AG04449 (cell line): ENCODE measurements at regions of chr6 and their contacts with region 1.

Region 1: DNA sequence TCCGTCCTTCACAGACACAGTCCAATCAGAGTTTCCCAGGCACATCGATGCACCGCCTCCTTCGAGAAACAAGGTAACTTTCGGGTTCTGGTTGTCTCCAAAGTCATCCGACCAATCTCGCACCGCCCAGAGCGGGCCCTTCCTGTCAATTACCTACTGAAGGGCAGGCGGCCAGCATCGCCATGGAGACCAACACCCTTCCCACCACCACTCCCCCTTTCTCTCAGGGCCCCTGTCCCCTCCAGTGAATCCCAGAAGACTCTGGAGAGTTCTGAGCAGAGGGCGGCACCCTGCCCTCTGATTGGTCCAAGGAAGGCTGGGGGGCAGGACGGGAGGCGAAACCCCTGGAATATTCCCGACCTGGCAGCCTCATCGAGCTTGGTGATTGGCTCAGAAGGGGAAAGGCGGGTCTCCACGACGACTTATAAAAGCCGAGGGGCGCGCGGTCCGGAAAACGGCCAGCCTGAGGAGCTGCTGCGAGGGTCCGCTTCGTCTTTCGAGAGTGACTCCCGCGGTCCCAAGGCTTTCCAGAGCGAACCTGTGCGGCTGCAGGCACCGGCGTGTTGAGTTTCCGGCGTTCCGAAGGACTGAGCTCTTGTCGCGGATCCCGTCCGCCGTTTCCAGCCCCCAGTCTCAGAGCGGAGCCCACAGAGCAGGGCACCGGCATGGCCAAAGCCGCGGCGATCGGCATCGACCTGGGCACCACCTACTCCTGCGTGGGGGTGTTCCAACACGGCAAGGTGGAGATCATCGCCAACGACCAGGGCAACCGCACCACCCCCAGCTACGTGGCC is at the start of gene HSPA1B:
- DNase-seq: peak; percentile 99
- H3K4me3 ChIP-seq: peak within 1 kb of the TSS; percentile 86
- CTCF ChIP-seq: no peak

Region 2: GRCh38 chr6:31680840-31681671 is 146.4 kb before region 1 on chr6 and contains the start of gene LY6G5C:
- CTCF ChIA-PET with region 1: interaction called, 60 read pairs
- POLR2A ChIA-PET with region 1: interaction called, 5 read pairs
- DNase-seq: peak; percentile 64
- H3K4me3 ChIP-seq: peak within 1 kb of the TSS; percentile 58
- CTCF ChIP-seq: peak; percentile 78

Region 3: DNA sequence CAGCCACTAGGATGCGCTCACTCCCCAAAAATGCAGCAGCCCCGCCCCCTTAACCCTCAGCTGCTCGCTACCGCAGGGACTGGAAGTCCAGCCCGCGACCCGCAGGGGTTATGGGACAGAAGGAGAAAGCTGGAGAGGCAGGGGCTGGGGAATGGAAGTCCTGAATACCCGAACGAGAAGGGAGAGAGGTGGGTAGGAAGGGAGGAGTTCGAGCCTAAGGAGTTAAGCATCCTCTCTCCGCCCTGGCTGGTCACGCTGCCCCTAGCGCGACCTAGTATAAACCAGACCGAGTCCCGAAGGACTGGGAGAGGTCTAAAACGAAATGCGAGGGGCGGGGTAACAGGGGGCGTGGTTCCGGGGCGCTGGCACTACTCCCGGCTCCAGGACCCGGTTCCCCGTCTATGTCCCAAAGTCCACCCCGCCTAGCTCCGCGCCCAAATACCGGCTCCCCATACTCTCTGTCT is 97.9 kb before region 1 on chr6:
- CTCF ChIA-PET with region 1: interaction called, 10 read pairs
- POLR2A ChIA-PET with region 1: interaction called, 32 read pairs
- DNase-seq: no peak
- H3K4me3 ChIP-seq: peak overlapping the region; percentile 89
- CTCF ChIP-seq: peak; percentile 72

Region 4: DNA sequence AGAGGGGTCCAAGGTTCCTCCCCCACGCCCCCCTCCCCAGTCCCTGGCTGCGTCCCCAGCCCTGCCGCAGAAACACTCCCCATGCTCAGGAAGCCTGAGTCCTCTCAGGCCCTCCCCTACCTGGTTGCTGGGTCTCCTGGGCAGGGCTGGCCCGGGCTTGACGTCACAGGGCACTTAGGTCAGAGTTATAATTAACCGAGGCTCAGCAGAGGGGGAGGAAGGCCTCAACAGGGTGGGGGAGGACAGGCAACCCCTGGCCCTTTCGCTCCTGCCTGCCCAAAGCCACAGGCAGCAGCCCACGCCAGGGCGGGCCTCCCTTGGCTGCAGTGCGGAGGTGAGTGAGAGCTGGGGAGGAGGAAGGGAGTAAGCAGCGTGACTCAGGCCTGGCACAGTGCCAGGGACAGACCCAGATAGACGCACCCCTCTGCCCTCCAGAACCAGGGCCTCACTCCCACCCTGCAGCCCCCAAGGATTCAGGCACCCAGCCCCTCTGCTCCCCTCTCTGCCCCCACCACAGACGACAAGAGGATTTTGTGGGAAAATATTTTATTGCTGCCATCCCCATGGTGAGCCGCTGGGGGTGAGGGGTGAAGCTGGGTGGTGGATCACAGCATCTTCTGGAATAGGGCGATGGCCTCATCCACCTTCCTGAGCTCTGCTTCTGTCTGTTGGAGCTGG is 50.4 kb before region 1 on chr6 and contains the start of gene VWA7:
- CTCF ChIA-PET with region 1: interaction called, 13 read pairs
- POLR2A ChIA-PET with region 1: interaction called, 5 read pairs
- DNase-seq: no peak
- H3K4me3 ChIP-seq: no peak within 1 kb of the TSS
- CTCF ChIP-seq: no peak

Region 5: DNA sequence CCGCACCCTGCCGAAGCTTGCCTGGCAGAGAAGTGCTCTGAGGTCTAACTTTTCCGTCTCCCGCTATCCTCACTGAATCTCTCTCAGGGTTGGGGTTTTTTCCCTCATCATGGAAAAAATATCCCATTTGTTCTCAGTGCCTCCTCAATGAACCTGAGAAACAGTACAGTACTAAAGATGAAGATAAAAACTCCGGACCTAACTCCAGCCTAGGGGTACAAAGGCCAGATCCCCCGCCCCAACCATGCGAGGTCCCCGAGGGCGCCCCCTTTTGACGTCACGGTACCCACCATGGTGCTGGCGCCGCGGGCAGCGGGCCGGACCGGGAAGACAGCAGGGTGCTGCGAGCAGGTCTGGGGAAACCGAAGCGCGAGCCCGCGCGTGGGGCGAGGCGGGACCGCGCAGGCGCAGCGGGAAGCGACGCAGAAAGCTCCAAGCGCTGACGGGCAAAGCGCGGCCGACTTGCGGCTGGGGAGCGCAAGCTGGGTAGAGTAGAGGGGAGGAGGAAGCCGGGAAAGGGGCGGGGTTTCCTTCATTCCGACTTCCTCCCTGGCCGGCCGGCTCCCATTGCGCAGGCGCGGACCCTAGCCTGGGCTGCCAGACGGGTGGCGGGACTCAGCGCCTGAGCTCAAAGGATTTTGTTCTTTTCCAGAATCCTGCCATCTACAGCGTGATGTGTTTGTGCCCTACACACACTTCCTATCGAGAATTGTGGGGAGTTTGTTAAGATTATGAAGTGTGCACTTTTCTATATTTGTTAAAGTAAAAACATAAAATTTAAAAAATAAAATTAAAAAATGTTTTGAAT is 20.8 kb before region 1 on chr6 and contains the start of gene LSM2:
- CTCF ChIA-PET with region 1: interaction called, 6 read pairs
- POLR2A ChIA-PET with region 1: interaction called, 14 read pairs
- DNase-seq: peak; percentile 67
- H3K4me3 ChIP-seq: peak within 1 kb of the TSS; percentile 83
- CTCF ChIP-seq: peak; percentile 44

Region 6: GRCh38 chr6:31862344-31863227 is 35.1 kb after region 1 on chr6 and contains the start of gene NEU1:
- CTCF ChIA-PET with region 1: no interaction called
- POLR2A ChIA-PET with region 1: interaction called, 19 read pairs
- DNase-seq: peak; percentile 99
- H3K4me3 ChIP-seq: peak within 1 kb of the TSS; percentile 94
- CTCF ChIP-seq: no peak

Region 7: GRCh38 chr6:31922942-31923341 is 95.5 kb after region 1 on chr6:
- CTCF ChIA-PET with region 1: no interaction called
- POLR2A ChIA-PET with region 1: no interaction called
- DNase-seq: no peak
- H3K4me3 ChIP-seq: no peak overlapping the region
- CTCF ChIP-seq: no peak